Breast epithelium (tissue), 4 donors: ENCODE measurements at regions of chr14 and their contacts with region 1.

Region 1: DNA sequence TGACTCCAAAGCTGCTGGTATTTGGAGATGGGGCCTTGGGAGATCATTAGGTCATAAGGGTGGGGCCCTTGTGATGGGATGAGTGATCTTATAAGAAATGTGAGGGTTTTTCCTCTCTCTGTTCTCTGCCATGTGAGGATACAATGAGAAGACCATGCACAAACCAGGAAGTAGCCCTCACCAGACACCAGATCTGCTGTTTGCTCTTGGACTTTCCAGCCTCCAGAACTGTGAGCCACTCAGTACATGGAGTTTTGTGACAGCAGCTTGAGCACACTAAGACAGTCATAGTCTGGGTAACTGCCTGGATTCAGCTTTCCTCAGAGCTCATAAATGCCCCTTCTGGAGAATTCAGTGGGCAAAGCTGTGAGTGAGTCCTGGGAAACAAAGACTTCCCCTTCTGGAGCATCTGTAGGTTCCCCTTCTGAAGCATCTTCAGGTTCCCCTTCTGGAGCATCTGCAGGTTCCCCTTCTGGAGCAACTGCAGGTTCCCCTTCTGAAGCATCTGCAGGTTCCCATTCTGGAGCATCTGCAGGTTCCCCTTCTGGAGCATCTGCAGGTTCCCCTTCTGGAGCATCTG is 11.0 kb upstream of the PPP4R3A start:
- DNase-seq: no peak
- H3K4me3 ChIP-seq: no peak overlapping the region
- H3K27ac ChIP-seq: no peak overlapping the region
- H3K4me1 ChIP-seq: no peaks in the 10 kb centered on the region
- H3K27me3 ChIP-seq: no peaks in the 10 kb centered on the region
- CTCF ChIP-seq: no peak
- POLR2A ChIP-seq: no peak

Region 2: GRCh38 chr14:92596331-92596911 is 1075.3 kb after region 1 on chr14:
- intact Hi-C with region 1: loop called (anchors 5 kb)
- DNase-seq: no peak
- H3K4me3 ChIP-seq: no peak overlapping the region
- H3K27ac ChIP-seq: no peak overlapping the region
- H3K4me1 ChIP-seq: no peaks in the 10 kb centered on the region
- H3K27me3 ChIP-seq: no peaks in the 10 kb centered on the region
- CTCF ChIP-seq: no peak
- POLR2A ChIP-seq: no peak

Region 3: GRCh38 chr14:93027810-93028723 is 1506.9 kb after region 1 on chr14:
- intact Hi-C with region 1: loop called (anchors 5 kb)
- DNase-seq: no peak
- H3K4me3 ChIP-seq: no peak overlapping the region
- H3K27ac ChIP-seq: no peak overlapping the region
- H3K4me1 ChIP-seq: no peaks in the 10 kb centered on the region
- H3K27me3 ChIP-seq: no peaks in the 10 kb centered on the region
- CTCF ChIP-seq: no peak
- POLR2A ChIP-seq: no peak